Heart left ventricle (tissue), 16 donors: ENCODE measurements at regions of chr12 and their contacts with region 1.

Region 1: GRCh38 chr12:123468562-123469185 is 10.7 kb downstream of the SNRNP35 start:
- DNase-seq: no peak
- ATAC-seq: no peak
- H3K4me3 ChIP-seq: no peak overlapping the region
- H3K27ac ChIP-seq: no peak overlapping the region
- H3K4me1 ChIP-seq: peaks cover 0 to 52% (median 22%) of the 10 kb centered on the region in 12 donors
- H3K27me3 ChIP-seq: no peaks in the 10 kb centered on the region
- CTCF ChIP-seq: peak in 4 of 12 donors; percentile 9 to 21 (median 15)
- POLR2A ChIP-seq: no peak

Region 2: DNA sequence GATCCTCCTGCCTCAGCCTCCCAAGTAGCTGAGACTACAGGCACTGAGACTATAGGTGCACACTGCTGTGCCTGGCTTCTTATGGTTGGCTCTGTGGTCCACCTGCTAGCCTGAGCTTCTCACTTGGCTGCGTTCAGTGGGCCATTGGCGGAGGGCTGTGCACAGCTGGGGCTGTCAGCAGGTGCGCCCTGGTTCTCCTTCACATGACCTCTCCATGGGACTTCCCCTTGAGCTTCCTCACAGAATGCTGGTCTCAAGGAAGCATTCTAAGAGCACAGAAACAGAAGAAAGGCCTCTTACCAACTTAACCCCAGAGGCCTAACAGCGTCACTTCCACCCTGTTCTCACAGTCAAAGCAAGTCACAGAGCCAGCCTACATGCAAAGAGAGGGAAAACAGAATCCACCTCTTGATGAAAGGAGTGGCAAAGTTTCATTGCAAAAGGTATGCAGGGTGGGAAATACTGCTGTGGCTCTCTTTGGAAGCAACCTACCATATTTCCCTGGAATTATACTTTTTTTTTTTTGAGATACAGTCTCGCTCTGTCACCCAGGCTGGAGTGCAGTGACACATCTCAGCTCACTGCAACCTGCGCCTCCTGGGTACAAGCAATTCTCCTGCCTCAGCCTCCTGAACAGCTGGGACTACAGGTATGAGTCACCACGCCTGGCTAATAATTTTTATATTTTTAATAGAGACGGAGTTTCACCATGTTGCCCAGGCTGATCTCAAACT is 41.5 kb before region 1 on chr12:
- intact Hi-C with region 1: loop called in 1 of 10 experiments (anchors 5 kb)
- DNase-seq: no peak
- ATAC-seq: no peak
- H3K4me3 ChIP-seq: no peak overlapping the region
- H3K27ac ChIP-seq: peak overlapping the region in 1 of 12 donors; percentile 18
- H3K4me1 ChIP-seq: peaks cover 0 to 10% (median 0%) of the 10 kb centered on the region in 12 donors
- H3K27me3 ChIP-seq: no peaks in the 10 kb centered on the region
- CTCF ChIP-seq: no peak
- POLR2A ChIP-seq: no peak

Region 3: DNA sequence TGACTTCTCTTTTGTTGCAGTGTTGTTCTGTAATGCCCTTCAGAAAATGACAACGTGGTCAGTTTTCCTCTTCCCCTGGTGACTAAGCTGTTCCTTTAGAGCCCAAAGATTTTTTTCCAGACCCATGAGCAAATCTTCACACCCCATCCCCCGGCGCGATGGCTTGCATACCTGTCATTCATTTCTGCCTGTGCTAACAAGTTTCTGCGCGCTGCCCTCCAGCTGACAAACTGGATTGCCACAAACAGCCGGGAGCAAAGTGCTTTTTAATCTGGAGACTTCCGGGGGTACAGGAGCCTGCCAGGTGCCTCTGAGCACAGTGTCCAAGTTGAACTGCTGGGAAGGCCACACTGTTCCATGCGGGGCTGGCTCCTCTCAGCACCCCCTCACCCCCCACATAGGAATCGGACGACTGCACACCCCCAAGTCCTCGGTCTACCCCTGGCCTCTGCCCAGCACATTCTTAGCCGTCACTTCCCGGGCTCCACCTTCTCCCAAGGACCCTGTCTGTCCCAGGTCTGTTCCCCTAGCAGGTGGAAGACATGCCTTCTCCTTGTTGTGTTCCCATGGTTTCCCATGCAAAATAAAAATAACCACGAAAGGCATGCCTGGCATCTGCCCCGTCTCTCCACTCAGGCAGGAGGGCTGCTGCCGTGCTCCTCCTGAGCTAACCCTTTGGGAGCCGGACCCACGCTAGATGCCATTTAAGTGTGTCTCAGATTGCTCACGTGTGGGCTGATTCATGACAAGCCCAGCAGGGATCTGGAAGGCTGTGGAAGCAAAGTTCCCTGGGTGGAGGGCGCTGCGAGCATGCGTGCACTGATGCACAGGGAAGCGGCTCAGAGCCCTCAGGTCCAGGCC is 50.7 kb after region 1 on chr12:
- intact Hi-C with region 1: loop called in 1 of 10 experiments (anchors 5 kb)
- DNase-seq: peak; percentile 63 to 87 (median 75)
- ATAC-seq: peak; percentile 64 to 85 (median 81)
- H3K4me3 ChIP-seq: peak overlapping the region in 2 of 12 donors; percentile 4 to 10
- H3K27ac ChIP-seq: peak overlapping the region; percentile 67 to 96 (median 82)
- H3K4me1 ChIP-seq: peaks cover 0 to 50% (median 12%) of the 10 kb centered on the region in 12 donors
- H3K27me3 ChIP-seq: no peaks in the 10 kb centered on the region
- CTCF ChIP-seq: no peak
- POLR2A ChIP-seq: no peak